GM13976 (cell line): ENCODE measurements at regions of chr6 and their contacts with region 1.

Region 1: GRCh38 chr6:7238900-7239589 is 74.0 kb downstream of the SSR1 start:
- DNase-seq: peak; percentile 75
- CTCF ChIP-seq: peak; percentile 82

Region 2: DNA sequence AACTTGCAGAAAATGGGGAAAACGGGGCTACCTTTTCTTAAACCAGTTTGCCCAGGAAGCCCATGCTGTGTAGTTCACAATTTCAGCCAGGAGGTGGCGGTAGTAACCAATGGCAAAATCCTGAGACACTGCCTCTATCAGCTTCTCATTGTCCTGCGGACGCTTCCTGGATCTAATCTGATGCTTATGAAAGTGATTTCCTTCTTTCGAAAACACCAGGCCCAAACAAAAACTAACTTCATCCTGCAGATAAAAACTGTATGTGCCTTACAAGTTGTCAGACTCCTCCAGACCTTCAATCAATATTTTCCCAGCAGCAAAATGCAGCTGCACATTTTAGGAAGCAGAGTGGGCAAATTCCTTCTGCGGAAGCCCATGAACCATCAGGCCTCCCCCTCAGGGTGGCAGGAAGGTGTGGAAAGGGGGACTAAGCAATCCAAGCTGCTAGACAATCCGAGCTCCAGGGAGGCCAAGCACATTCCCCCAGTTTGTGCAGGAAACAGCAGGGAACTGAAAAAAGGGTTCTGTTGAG is 562.1 kb before region 1 on chr6:
- in situ Hi-C with region 1: loop called (anchors 25 kb)
- DNase-seq: peak; percentile 77
- CTCF ChIP-seq: peak; percentile 75